IMR-90 (cell line): ENCODE measurements at regions of chr12 and their contacts with region 1.

Region 1: GRCh38 chr12:121550974-121551634 is 29.7 kb downstream of the KDM2B start:
- DNase-seq: no peak
- ATAC-seq: no peak
- H3K4me3 ChIP-seq: no peak overlapping the region
- H3K27ac ChIP-seq: no peak overlapping the region
- H3K4me1 ChIP-seq: no peaks in the 10 kb centered on the region
- H3K27me3 ChIP-seq: no peaks in the 10 kb centered on the region
- CTCF ChIP-seq: no peak
- POLR2A ChIP-seq: no peak
- RAD21 ChIP-seq: no peak

Region 2: GRCh38 chr12:121657305-121658008 is 106.4 kb after region 1 on chr12:
- CTCF ChIA-PET with region 1: no interaction called
- POLR2A ChIA-PET with region 1: no interaction called
- dilution Hi-C with region 1: no loop called
- in situ Hi-C with region 1: no loop called
- intact Hi-C with region 1: no loop called
- DNase-seq: no peak
- ATAC-seq: no peak
- H3K4me3 ChIP-seq: no peak overlapping the region
- H3K27ac ChIP-seq: no peak overlapping the region
- H3K4me1 ChIP-seq: no peaks in the 10 kb centered on the region; the same call in 1 of the 2 replicates
- H3K27me3 ChIP-seq: no peaks in the 10 kb centered on the region
- CTCF ChIP-seq: no peak
- POLR2A ChIP-seq: no peak
- RAD21 ChIP-seq: no peak

Region 3: DNA sequence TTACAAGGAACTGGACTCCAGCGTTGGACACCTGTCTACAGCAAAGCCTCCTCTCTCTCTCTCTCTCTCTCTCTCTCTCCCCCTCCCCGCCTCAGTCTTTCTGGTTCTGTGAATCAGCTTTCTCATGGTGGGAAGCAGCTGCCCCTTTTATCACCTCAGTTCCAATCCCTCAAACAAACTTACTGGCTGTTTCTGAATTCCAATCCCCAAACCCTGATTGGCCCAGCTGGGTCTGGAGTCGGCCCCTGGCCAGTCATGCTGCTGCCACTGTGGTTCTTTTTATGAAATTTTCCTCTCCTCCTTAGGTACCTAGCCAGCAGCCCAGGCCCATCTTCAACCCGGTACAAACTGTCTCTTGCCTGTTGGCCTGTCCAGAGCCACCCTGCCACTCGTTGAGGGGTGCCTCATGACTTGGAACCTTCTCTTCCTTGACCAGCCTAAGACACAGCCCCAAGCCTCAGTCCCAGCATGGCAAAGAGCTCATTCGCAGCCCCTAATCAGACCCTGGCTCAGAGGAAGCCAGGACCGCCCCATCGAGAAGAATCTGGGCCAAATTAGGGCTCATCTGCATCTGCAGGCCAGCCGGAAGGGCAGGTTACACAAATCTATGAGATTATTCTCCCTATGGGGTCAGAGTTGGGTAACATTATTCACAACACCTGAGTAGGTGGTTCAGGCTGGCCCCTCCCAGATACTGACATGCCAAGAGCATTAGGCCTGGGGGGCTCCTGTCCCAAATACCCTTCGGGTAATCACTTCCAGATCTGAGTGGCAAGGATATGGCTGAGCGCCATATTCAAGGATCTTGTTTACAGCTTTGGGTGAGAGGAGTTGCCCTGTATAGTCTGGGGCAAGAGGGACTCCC is 127.8 kb after region 1 on chr12:
- CTCF ChIA-PET with region 1: interaction called, 6 read pairs
- POLR2A ChIA-PET with region 1: no interaction called
- dilution Hi-C with region 1: no loop called
- in situ Hi-C with region 1: no loop called
- intact Hi-C with region 1: loop called (anchors 1 kb)
- DNase-seq: peak; percentile 50
- ATAC-seq: peak; percentile 65; the same call in 1 of the 2 replicates
- H3K4me3 ChIP-seq: no peak overlapping the region
- H3K27ac ChIP-seq: no peak overlapping the region
- H3K4me1 ChIP-seq: peaks cover 2% of the 10 kb centered on the region; the same call in 1 of the 2 replicates
- H3K27me3 ChIP-seq: no peaks in the 10 kb centered on the region
- CTCF ChIP-seq: no peak
- POLR2A ChIP-seq: no peak
- RAD21 ChIP-seq: no peak

Region 4: DNA sequence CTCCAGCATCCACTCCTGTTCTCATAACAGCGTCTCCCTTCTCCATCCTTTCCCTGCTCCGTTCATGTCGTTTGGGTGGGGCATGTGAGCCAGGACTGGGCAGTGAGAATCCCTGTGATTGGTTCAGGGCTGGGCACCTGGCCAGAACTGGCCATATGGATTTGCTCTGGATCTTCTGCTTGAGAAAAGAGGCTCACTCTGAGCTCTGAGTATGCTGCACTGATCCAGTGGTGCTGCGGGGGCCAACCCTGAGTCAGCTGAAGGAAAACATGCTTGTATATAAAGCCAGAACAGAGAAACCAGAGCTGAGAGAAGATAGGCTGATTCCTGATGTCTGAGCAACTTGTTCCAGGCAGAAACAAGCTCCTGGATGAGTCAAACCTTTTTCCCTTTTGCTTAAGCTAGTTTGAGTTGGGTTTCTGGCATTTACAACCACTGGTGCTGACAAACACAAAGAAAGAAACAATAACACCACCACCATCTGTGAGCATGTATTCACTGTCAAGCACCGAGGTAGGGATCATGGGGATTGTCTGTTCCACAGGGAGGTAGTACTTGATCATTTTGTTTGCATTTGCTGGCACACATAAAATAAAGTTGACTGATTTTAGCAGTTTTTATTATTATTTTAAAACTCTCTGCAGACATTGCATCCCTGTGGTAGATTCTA is 321.6 kb after region 1 on chr12:
- CTCF ChIA-PET with region 1: no interaction called
- POLR2A ChIA-PET with region 1: no interaction called
- dilution Hi-C with region 1: no loop called
- in situ Hi-C with region 1: no loop called
- intact Hi-C with region 1: no loop called
- DNase-seq: peak; percentile 99
- ATAC-seq: peak; percentile 99
- H3K4me3 ChIP-seq: no peak overlapping the region
- H3K27ac ChIP-seq: peak overlapping the region; percentile 94
- H3K4me1 ChIP-seq: peaks cover 4% of the 10 kb centered on the region
- H3K27me3 ChIP-seq: no peaks in the 10 kb centered on the region
- CTCF ChIP-seq: no peak
- POLR2A ChIP-seq: no peak
- RAD21 ChIP-seq: peak; percentile 1; the same call in 1 of the 2 replicates

Region 5: DNA sequence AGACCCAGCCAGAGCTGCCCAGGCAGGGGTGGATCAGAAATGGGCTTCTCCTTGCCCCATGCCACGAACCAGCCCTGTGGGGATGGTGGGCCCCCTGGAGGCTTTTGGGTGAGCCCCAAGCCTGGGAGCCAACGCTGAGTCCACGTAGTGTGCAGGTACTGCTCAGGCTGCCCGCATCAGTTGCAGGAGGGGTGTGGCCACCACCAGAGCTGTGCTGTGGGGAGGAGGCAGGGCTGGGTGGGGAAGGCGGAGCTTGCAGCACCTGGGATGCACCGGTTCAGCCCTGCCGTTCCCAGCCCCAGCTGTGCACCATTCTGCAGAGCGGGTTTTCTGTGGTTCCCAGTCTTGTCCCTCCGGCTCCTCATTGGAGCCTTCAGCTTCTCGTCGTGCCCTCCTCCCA is 586.6 kb after region 1 on chr12:
- CTCF ChIA-PET with region 1: no interaction called
- POLR2A ChIA-PET with region 1: no interaction called
- dilution Hi-C with region 1: no loop called
- in situ Hi-C with region 1: no loop called
- intact Hi-C with region 1: no loop called
- DNase-seq: no peak
- ATAC-seq: no peak
- H3K4me3 ChIP-seq: no peak overlapping the region
- H3K27ac ChIP-seq: no peak overlapping the region
- H3K4me1 ChIP-seq: no peaks in the 10 kb centered on the region
- H3K27me3 ChIP-seq: no peaks in the 10 kb centered on the region
- CTCF ChIP-seq: no peak
- POLR2A ChIP-seq: no peak
- RAD21 ChIP-seq: no peak